ENCODE measurements at regions of chr5 and their contacts with region 1.

Region 1: DNA sequence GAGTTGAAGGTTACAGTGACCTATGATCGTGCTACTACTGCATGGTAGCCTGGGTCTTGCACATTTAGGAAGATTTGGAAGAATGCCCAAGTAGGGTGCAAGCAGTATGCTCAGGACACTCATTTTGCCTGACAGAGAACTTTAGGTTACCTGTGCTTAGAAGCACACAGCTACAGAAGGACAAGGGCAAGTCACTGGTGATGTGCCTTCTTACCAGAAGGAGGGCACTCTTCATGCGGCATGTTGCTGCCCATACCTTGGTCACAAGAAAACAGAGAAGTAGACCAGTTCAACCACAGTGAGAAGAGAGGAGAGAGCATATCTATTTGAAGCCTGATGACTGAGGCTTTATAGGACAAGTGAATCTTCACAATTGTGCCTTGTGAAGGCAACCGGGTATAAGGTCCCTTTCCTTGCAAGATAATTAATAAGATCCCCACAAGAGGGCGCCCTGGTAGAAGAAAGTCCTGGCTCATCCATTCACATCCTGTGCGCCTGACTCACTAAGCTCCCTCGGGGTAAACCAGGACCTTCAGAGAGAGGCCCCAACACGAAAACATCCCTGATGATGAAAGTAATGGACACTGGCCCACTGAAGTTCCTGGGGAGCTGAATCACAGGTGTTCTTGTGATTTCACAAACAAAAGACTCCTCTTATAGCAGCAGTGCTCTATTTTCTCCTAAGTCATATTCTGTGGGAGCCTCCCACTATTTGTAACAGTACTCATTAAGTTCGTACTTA is 38.1 kb upstream of the STARD4 start:
- DNase-seq: peak; percentile 23 to 95
- ATAC-seq: peak; percentile 90 to 95 (median 92)
- H3K4me3 ChIP-seq: peak overlapping the region in 2 of 10 donors; percentile 1 to 21
- H3K27ac ChIP-seq: peak overlapping the region; percentile 11 to 85 (median 72)
- H3K4me1 ChIP-seq: peaks cover 2 to 38% (median 22%) of the 10 kb centered on the region in 9 donors
- H3K27me3 ChIP-seq: no peaks in the 10 kb centered on the region
- CTCF ChIP-seq: peak; percentile 52 to 84 (median 70)

Region 2: DNA sequence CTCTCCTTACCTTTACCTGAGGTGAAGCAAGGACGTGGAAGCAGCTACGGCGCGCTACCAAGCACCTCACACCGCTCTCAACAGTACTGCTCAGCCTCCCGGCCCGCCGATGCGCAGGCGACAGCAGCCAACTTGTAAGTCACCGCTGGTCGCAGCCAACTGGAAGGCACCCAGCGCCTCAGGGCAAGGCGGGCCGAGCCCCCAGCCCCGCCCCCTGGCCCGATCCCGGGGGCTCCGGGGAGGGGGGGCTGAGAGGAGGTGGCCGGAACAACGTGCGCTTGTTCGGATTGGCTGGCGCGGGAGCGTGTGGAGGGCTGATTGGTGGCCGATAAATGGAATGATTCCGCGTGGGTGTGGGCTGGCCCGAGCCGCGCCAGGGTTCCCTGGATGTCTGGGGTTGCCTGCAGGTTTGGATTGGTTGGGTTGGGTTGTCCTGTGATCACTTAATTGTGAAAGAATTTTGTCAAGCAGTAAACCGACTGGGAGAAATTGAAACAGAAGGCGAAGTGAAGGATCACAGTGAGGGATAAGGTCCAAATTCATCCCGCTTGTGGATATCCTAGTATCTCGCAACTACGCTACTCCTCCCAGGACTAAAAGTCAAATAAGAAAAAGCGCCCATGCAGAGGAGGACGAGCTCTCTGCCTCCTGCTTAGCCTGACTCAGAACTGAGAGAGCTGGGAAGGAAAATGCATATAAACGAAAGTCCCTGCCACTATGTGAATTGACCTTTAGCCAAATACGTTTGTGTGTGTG is 37.9 kb before region 1 on chr5 and contains the start of gene STARD4:
- intact Hi-C with region 1: loop called in 1 of 10 experiments (anchors 2 kb)
- DNase-seq: peak; percentile 92 to 97
- ATAC-seq: peak; percentile 98 to 100 (median 99)
- H3K4me3 ChIP-seq: peak within 1 kb of the TSS; percentile 60 to 93 (median 86)
- H3K27ac ChIP-seq: peak within 1 kb of the TSS; percentile 18 to 93 (median 90)
- H3K4me1 ChIP-seq: peaks cover 0 to 40% (median 10%) of the 10 kb centered on the region in 9 donors
- H3K27me3 ChIP-seq: no peaks in the 10 kb centered on the region
- CTCF ChIP-seq: no peak
- total RNA-seq, gene STARD4: 3.5 to 14.0 (median 6.1) TPM

Region 3: DNA sequence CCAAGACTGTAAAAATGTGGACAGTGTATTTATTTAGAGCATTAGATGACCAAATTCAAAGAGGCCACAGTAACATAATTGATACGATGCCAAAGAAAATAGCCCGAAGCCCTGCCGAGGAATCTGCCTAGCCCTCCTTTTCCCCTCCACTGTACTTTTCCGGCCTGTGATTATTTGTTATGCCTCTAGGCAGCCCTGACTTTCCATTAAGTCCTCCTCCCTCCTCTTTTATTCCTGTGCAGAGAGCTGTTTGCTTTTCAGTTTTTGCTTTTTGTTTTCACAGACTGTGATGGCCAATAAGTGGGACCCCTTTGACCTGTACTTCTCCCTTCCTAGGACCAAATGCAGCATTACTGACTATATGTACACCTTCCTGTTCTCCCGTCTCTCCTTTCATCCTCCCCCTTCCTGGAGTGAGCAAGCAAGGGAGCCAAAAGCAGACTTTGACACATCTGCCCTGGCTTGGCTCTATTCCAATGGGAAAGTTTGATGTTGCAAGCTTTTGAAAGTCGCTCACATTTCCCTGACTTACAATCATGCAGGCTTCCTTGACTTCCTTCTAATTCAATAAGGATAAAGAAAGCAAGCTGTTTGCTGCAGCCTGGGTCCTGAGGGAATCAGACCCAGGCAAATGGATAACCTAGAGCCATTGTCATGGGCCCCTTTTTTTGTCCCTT is 130.4 kb after region 1 on chr5:
- intact Hi-C with region 1: loop called in 6 of 10 experiments (anchors 2 to 10 kb)
- DNase-seq: peak; percentile 14 to 88
- ATAC-seq: peak; percentile 80 to 93 (median 86)
- H3K4me3 ChIP-seq: peak overlapping the region in 4 of 10 donors; percentile 5 to 32 (median 20)
- H3K27ac ChIP-seq: peak overlapping the region in 9 of 10 donors; percentile 23 to 80 (median 67)
- H3K4me1 ChIP-seq: peaks cover 0 to 52% (median 32%) of the 10 kb centered on the region in 9 donors
- H3K27me3 ChIP-seq: no peaks in the 10 kb centered on the region
- CTCF ChIP-seq: no peak

Region 4: GRCh38 chr5:111830333-111830732 is 279.9 kb after region 1 on chr5:
- intact Hi-C with region 1: loop called in 2 of 10 experiments (anchors 10 kb)
- DNase-seq: no peak
- ATAC-seq: no peak
- H3K4me3 ChIP-seq: no peak overlapping the region
- H3K27ac ChIP-seq: no peak overlapping the region
- H3K4me1 ChIP-seq: peaks cover 0 to 5% (median 0%) of the 10 kb centered on the region in 9 donors
- H3K27me3 ChIP-seq: no peaks in the 10 kb centered on the region
- CTCF ChIP-seq: no peak

Region 5: DNA sequence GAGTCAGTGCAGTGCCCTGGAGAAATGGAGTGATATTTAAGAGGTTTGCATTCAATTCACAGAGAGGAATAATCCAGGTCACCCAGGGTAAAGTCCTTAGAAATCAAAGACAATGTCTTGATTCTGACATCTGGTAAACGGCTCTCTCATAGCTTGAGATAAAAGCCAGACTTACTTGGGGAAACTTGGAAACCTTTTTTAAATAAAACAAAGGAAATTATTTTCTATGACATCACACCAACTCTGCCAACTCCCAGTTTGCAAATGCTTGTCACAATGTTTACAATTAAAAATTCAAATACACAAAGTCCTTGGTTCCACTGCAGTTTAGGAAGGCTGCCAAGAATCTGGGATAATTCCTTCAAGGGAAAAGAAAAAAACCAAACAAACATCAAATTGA is 461.7 kb after region 1 on chr5:
- intact Hi-C with region 1: loop called in 3 of 10 experiments (anchors 1 to 10 kb)
- DNase-seq: peak in 1 of 2 donors; percentile 52
- ATAC-seq: peak in 7 of 8 donors; percentile 55 to 93 (median 82)
- H3K4me3 ChIP-seq: no peak overlapping the region
- H3K27ac ChIP-seq: peak overlapping the region in 4 of 10 donors; percentile 45 to 63 (median 54)
- H3K4me1 ChIP-seq: peaks cover 0 to 42% (median 19%) of the 10 kb centered on the region in 9 donors
- H3K27me3 ChIP-seq: no peaks in the 10 kb centered on the region
- CTCF ChIP-seq: no peak

Measured in heart right ventricle (tissue), 16 donors.